ENCODE measurements at regions of chr5 and their contacts with region 1.

Region 1: GRCh38 chr5:67720162-67720772 is 495.3 kb upstream of the PIK3R1 start:
- DNase-seq: no peak
- H3K4me3 ChIP-seq: no peak overlapping the region
- H3K27ac ChIP-seq: no peak overlapping the region
- H3K4me1 ChIP-seq: no peaks in the 10 kb centered on the region
- CTCF ChIP-seq: no peak

Region 2: DNA sequence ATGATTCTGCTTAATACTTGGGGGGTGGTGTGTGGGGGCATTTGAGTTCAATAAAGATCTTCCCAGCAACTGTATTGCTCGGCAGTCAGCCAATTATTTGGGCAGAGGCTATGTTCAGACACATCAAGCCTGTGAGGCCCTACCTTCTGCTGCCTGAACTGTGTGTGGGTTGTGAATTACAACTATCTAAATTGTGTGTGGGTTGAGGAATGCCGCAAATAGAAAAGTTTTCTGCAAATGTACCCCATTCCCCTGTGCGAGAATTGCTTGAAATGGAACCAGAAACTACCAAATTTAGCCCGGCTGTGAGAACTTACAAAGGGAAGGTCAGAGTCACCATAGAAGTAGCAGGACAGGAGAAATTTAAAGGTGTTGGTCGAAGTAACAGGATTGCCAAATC is 135.3 kb after region 1 on chr5:
- CTCF ChIA-PET with region 1: no interaction called
- POLR2A ChIA-PET with region 1: interaction called, 12 read pairs
- intact Hi-C with region 1: no loop called
- DNase-seq: no peak
- H3K4me3 ChIP-seq: no peak overlapping the region
- H3K27ac ChIP-seq: no peak overlapping the region
- H3K4me1 ChIP-seq: no peaks in the 10 kb centered on the region
- CTCF ChIP-seq: no peak